Esophagus muscularis mucosa (tissue), 4 donors: ENCODE measurements at regions of chr1 and their contacts with region 1.

Region 1: DNA sequence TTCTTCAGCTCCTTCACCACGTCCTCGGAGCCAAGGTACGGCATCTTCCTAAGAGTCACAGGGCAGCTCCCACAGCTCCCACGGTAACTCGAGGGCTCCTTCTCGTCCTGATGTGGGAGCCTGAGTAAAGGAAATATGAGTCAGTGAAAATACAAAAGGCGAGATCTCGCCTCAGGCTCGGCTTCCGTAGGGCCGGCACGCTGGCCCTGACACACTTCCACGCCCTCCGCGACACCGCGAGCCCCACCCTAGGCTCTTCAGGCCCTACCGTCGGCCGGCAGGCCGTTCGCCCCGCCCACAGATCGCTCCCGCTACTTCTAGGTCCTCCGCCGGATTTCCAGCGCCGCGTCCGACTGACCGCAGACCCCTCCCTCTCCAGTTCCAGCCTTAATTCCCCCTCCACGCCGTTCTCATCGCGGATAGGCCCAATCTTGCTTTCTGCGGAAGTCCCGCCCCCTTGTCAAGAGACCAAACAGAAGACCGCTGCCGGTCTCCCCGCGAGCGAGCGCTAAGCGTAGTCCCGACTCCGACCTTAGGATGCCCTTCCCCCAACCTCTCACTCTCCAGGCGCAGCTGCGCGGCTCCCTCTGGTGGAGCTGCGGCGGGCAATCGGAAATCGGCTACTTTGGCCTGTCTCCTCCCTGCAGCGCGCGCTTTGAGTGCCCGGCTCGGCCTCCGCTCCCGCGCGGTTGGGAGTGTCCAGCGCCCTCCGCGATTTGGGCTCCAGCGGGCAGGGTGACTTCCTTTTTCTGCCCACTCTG is at the starts of genes AP4B1 and DCLRE1B:
- DNase-seq: peak; percentile 99
- H3K4me3 ChIP-seq: peak within 1 kb of the TSS; percentile 69 to 83 (median 77)
- H3K27ac ChIP-seq: peak within 1 kb of the TSS; percentile 91 to 93 (median 91)
- H3K4me1 ChIP-seq: peaks cover 25 to 41% (median 31%) of the 10 kb centered on the region in 4 donors
- H3K27me3 ChIP-seq: no peaks in the 10 kb centered on the region
- CTCF ChIP-seq: peak; percentile 68 to 80 (median 76)
- EP300 ChIP-seq: no peak
- POLR2A ChIP-seq: peak; percentile 37
- total RNA-seq, gene AP4B1: 5.9 to 13.7 (median 6.0) TPM
- total RNA-seq, gene DCLRE1B: 4.2 to 8.8 (median 5.5) TPM

Region 2: GRCh38 chr1:113835642-113836307 is 69.1 kb before region 1 on chr1:
- intact Hi-C with region 1: loop called (anchors 5 kb)
- DNase-seq: no peak
- H3K4me3 ChIP-seq: no peak overlapping the region
- H3K27ac ChIP-seq: no peak overlapping the region
- H3K4me1 ChIP-seq: no peaks in the 10 kb centered on the region
- H3K27me3 ChIP-seq: no peaks in the 10 kb centered on the region
- CTCF ChIP-seq: peak; percentile 54 to 65 (median 63)
- EP300 ChIP-seq: no peak
- POLR2A ChIP-seq: no peak

Region 3: DNA sequence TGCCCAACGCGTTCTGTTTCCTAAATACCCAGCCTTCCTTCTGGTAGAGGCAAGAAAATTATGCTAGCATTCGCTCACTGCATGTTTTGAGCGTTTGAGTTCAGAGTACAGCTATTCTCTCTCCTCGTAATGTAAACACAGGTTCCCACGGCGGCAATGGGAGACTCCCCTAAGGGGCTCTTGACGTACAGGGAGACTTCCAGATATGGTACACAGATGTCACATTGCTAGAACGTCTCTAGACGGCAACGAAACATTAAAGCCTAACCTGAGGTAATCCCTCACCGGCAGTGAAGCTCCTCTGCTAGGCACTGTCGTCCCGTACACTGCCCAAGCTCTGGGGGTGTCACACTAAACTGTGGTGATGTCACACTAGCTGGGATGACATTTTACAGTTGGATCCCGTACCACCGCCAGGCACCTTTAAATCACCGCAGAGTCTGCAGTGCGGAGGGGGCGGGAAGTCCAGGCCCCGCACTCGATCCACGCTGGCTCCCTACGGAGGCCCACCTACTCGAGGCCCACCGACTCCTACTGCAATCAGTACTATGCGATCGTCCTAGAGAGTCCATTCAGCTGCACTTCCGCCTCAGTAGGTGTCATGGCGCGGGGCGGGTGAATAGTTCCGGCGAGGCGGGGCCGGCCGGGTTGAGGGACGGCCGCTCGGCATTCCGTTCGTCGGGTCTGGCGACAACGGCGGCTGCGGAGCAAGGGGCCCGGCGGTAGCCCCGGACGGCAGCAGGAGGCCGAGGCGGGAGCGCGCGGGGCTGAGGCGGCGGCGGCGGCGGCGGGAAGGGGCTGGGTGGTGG is 24.3 kb after region 1 on chr1 and contains the start of gene HIPK1:
- intact Hi-C with region 1: loop called (anchors 1 kb)
- DNase-seq: peak; percentile 98
- H3K4me3 ChIP-seq: peak within 1 kb of the TSS; percentile 74 to 97 (median 84)
- H3K27ac ChIP-seq: peak within 1 kb of the TSS; percentile 90 to 98 (median 94)
- H3K4me1 ChIP-seq: peaks cover 40 to 55% (median 51%) of the 10 kb centered on the region in 4 donors
- H3K27me3 ChIP-seq: no peaks in the 10 kb centered on the region
- CTCF ChIP-seq: no peak
- EP300 ChIP-seq: no peak
- POLR2A ChIP-seq: peak; percentile 39
- total RNA-seq, gene HIPK1: 60.6 to 89.9 (median 76.5) TPM

Region 4: GRCh38 chr1:113949007-113949406 is 44.2 kb after region 1 on chr1:
- intact Hi-C with region 1: loop called (anchors 5 kb)
- DNase-seq: no peak
- H3K4me3 ChIP-seq: no peak overlapping the region
- H3K27ac ChIP-seq: peak overlapping the region; percentile 35 to 59 (median 58)
- H3K4me1 ChIP-seq: peaks cover 27 to 73% (median 67%) of the 10 kb centered on the region in 4 donors
- H3K27me3 ChIP-seq: no peaks in the 10 kb centered on the region
- CTCF ChIP-seq: peak in 1 of 3 experiments; percentile 33
- EP300 ChIP-seq: no peak
- POLR2A ChIP-seq: no peak